HepG2 (cell line): ENCODE measurements at regions of chr3 and their contacts with region 1.

Region 1: GRCh38 chr3:43523454-43524053 is 98.3 kb downstream of the ANO10 start:
- DNase-seq: peak; percentile 13
- ATAC-seq: no peak
- H3K4me3 ChIP-seq: no peak overlapping the region
- H3K27ac ChIP-seq: no peak overlapping the region
- H3K4me1 ChIP-seq: peaks cover 13% of the 10 kb centered on the region; the same call in 1 of the 2 replicates
- H3K27me3 ChIP-seq: no peaks in the 10 kb centered on the region
- CTCF ChIP-seq: no peak
- EP300 ChIP-seq: no peak
- POLR2A ChIP-seq: no peak
- RAD21 ChIP-seq: no peak

Region 2: DNA sequence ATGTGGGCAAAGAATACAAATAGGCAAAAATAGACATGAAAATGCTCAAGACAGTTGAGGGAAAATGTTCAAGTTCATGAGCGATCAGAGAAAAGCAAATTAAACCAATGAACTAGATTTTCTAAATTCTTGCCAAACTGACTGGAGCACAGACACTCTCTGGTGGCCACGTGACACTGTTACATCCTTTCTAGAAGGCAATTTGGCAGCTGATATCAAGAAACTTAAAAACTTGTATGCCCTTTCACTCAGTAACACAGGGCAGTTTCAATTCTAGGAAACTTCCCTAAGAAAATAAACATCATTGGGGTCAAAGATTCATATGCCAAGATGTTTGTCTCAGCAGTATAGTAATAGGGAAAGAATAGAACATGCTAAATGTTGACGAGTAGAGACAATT is 219.4 kb after region 1 on chr3:
- CTCF ChIA-PET with region 1: no interaction called
- POLR2A ChIA-PET with region 1: no interaction called
- in situ Hi-C with region 1: no loop called
- intact Hi-C with region 1: no loop called
- DNase-seq: no peak
- ATAC-seq: no peak
- H3K4me3 ChIP-seq: no peak overlapping the region
- H3K27ac ChIP-seq: no peak overlapping the region
- H3K4me1 ChIP-seq: peaks cover 9% of the 10 kb centered on the region
- H3K27me3 ChIP-seq: peaks cover 0 to 10% of the 10 kb centered on the region in 2 experiments; a peak in 2 of 5 replicates
- CTCF ChIP-seq: no peak; the same call in 1 of the 2 replicates
- EP300 ChIP-seq: no peak
- POLR2A ChIP-seq: no peak
- RAD21 ChIP-seq: no peak

Region 3: GRCh38 chr3:44208086-44208485 is 684.5 kb after region 1 on chr3:
- CTCF ChIA-PET with region 1: no interaction called
- POLR2A ChIA-PET with region 1: no interaction called
- in situ Hi-C with region 1: no loop called
- intact Hi-C with region 1: loop called (anchors 10 kb)
- DNase-seq: no peak
- ATAC-seq: no peak
- H3K4me3 ChIP-seq: no peak overlapping the region
- H3K27ac ChIP-seq: no peak overlapping the region
- H3K4me1 ChIP-seq: no peaks in the 10 kb centered on the region
- H3K27me3 ChIP-seq: peaks cover 0 to 5% of the 10 kb centered on the region in 2 experiments; a peak in 2 of 5 replicates
- CTCF ChIP-seq: no peak
- EP300 ChIP-seq: no peak
- POLR2A ChIP-seq: no peak
- RAD21 ChIP-seq: no peak